ENCODE measurements at regions of chr5 and their contacts with region 1.

Region 1: GRCh38 chr5:50751064-50751657 is 84.7 kb downstream of the PARP8 start:
- DNase-seq: no peak
- ATAC-seq: peak; percentile 91
- H3K4me3 Mint-ChIP-seq: no peak overlapping the region
- H3K27ac Mint-ChIP-seq: no peak overlapping the region
- H3K4me1 Mint-ChIP-seq: peaks cover 21% of the 10 kb centered on the region
- H3K27me3 Mint-ChIP-seq: no peaks in the 10 kb centered on the region
- CTCF ChIP-seq: peak; percentile 68

Region 2: GRCh38 chr5:50325237-50325832 is 425.8 kb before region 1 on chr5:
- CTCF ChIA-PET with region 1: no interaction called
- POLR2A ChIA-PET with region 1: no interaction called
- intact Hi-C with region 1: loop called (anchors 2 kb)
- DNase-seq: no peak
- ATAC-seq: no peak
- H3K4me3 Mint-ChIP-seq: no peak overlapping the region
- H3K27ac Mint-ChIP-seq: no peak overlapping the region
- H3K4me1 Mint-ChIP-seq: peaks cover 2% of the 10 kb centered on the region
- H3K27me3 Mint-ChIP-seq: no peaks in the 10 kb centered on the region
- CTCF ChIP-seq: peak; percentile 89

Region 3: GRCh38 chr5:50415912-50416311 is 335.2 kb before region 1 on chr5:
- CTCF ChIA-PET with region 1: no interaction called
- POLR2A ChIA-PET with region 1: no interaction called
- intact Hi-C with region 1: loop called (anchors 5 kb)
- DNase-seq: no peak
- ATAC-seq: peak; percentile 85
- H3K4me3 Mint-ChIP-seq: no peak overlapping the region
- H3K27ac Mint-ChIP-seq: peak overlapping the region; percentile 75
- H3K4me1 Mint-ChIP-seq: peaks cover 71% of the 10 kb centered on the region
- H3K27me3 Mint-ChIP-seq: no peaks in the 10 kb centered on the region
- CTCF ChIP-seq: no peak

Region 4: GRCh38 chr5:50440651-50441492 is 310.3 kb before region 1 on chr5 and contains the start of gene EMB:
- CTCF ChIA-PET with region 1: interaction called, 6 read pairs
- POLR2A ChIA-PET with region 1: no interaction called
- intact Hi-C with region 1: loop called (anchors 2 kb)
- DNase-seq: peak; percentile 73
- ATAC-seq: peak; percentile 79
- H3K4me3 Mint-ChIP-seq: peak within 1 kb of the TSS; percentile 90
- H3K27ac Mint-ChIP-seq: peak within 1 kb of the TSS; percentile 98
- H3K4me1 Mint-ChIP-seq: peaks cover 64% of the 10 kb centered on the region
- H3K27me3 Mint-ChIP-seq: no peaks in the 10 kb centered on the region
- CTCF ChIP-seq: no peak
- total RNA-seq, gene EMB: 70.2 and 72.1 TPM in 2 replicates

Region 5: GRCh38 chr5:50606179-50606578 is 145.0 kb before region 1 on chr5:
- CTCF ChIA-PET with region 1: no interaction called
- POLR2A ChIA-PET with region 1: no interaction called
- intact Hi-C with region 1: loop called (anchors 5 kb)
- DNase-seq: no peak
- ATAC-seq: no peak
- H3K4me3 Mint-ChIP-seq: no peak overlapping the region
- H3K27ac Mint-ChIP-seq: no peak overlapping the region
- H3K4me1 Mint-ChIP-seq: peaks cover 7% of the 10 kb centered on the region
- H3K27me3 Mint-ChIP-seq: no peaks in the 10 kb centered on the region
- CTCF ChIP-seq: no peak

Region 6: GRCh38 chr5:50646591-50646990 is 104.6 kb before region 1 on chr5:
- CTCF ChIA-PET with region 1: no interaction called
- POLR2A ChIA-PET with region 1: no interaction called
- intact Hi-C with region 1: no loop called
- DNase-seq: no peak
- ATAC-seq: no peak
- H3K4me3 Mint-ChIP-seq: no peak overlapping the region
- H3K27ac Mint-ChIP-seq: no peak overlapping the region
- H3K4me1 Mint-ChIP-seq: no peaks in the 10 kb centered on the region
- H3K27me3 Mint-ChIP-seq: no peaks in the 10 kb centered on the region
- CTCF ChIP-seq: no peak

Region 7: GRCh38 chr5:50684721-50685120 is 66.4 kb before region 1 on chr5:
- CTCF ChIA-PET with region 1: no interaction called
- POLR2A ChIA-PET with region 1: no interaction called
- intact Hi-C with region 1: loop called (anchors 5 kb)
- DNase-seq: no peak
- ATAC-seq: no peak
- H3K4me3 Mint-ChIP-seq: no peak overlapping the region
- H3K27ac Mint-ChIP-seq: no peak overlapping the region
- H3K4me1 Mint-ChIP-seq: peaks cover 56% of the 10 kb centered on the region
- H3K27me3 Mint-ChIP-seq: no peaks in the 10 kb centered on the region
- CTCF ChIP-seq: no peak

Region 8: GRCh38 chr5:50711273-50711672 is 39.9 kb before region 1 on chr5:
- CTCF ChIA-PET with region 1: no interaction called
- POLR2A ChIA-PET with region 1: no interaction called
- intact Hi-C with region 1: loop called (anchors 5 kb)
- DNase-seq: no peak
- ATAC-seq: peak; percentile 94
- H3K4me3 Mint-ChIP-seq: peak overlapping the region; percentile 76
- H3K27ac Mint-ChIP-seq: peak overlapping the region; percentile 89
- H3K4me1 Mint-ChIP-seq: peaks cover 68% of the 10 kb centered on the region
- H3K27me3 Mint-ChIP-seq: no peaks in the 10 kb centered on the region
- CTCF ChIP-seq: no peak